ENCODE measurements at regions of chr12 and their contacts with region 1.

Region 1: GRCh38 chr12:10613349-10614055 is at the start of gene MAGOHB:
- DNase-seq: peak; percentile 97 to 100 (median 99)
- ATAC-seq: peak; percentile 90
- H3K4me3 ChIP-seq: peak within 1 kb of the TSS; percentile 74 to 97
- H3K4me3 Mint-ChIP-seq: peak within 1 kb of the TSS; percentile 100
- H3K27ac ChIP-seq: peak within 1 kb of the TSS; percentile 91 to 99
- H3K27ac Mint-ChIP-seq: peak within 1 kb of the TSS; percentile 100
- H3K4me1 ChIP-seq: peaks cover 19% of the 10 kb centered on the region
- H3K4me1 Mint-ChIP-seq: peaks cover 33% of the 10 kb centered on the region
- H3K27me3 ChIP-seq: no peaks in the 10 kb centered on the region
- H3K27me3 Mint-ChIP-seq: no peaks in the 10 kb centered on the region
- CTCF ChIP-seq: no peak
- total RNA-seq, gene MAGOHB: 7.9 to 8.5 TPM

Region 2: GRCh38 chr12:9124383-9125031 is 1489.0 kb before region 1 on chr12:
- CTCF ChIA-PET with region 1: no interaction called
- POLR2A ChIA-PET with region 1: no interaction called
- intact Hi-C with region 1: no loop called
- DNase-seq: no peak
- ATAC-seq: no peak
- H3K4me3 ChIP-seq: no peak overlapping the region
- H3K4me3 Mint-ChIP-seq: no peak overlapping the region
- H3K27ac ChIP-seq: no peak overlapping the region
- H3K27ac Mint-ChIP-seq: no peak overlapping the region
- H3K4me1 ChIP-seq: no peaks in the 10 kb centered on the region
- H3K4me1 Mint-ChIP-seq: no peaks in the 10 kb centered on the region
- H3K27me3 ChIP-seq: no peaks in the 10 kb centered on the region
- H3K27me3 Mint-ChIP-seq: no peaks in the 10 kb centered on the region
- CTCF ChIP-seq: no peak

Region 3: DNA sequence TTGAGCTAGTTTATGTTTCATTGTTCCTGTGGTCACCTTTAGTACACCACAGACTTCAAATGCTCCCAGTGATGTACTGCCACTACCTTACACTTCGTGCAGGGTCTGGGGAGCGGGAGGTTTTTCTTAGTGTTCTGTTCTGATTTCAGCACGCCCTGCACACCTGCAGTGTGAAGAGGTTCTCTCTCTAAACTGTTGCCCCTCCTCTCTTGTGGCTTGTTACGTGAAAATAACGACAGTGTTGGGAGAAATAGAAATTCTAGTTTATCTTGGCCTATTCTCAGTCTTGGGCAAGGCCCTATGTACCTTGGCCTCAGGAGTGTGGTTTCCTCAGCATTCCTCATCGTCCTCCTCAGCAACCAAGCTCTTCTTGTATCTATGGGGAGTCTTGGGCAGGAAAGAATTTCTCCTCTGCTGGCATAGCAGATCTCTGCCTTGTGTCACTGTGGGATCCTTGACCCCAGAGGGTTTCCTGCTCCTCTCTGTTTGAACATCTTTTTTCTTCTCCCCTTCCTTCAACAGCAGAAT is 59.2 kb before region 1 on chr12:
- CTCF ChIA-PET with region 1: no interaction called
- POLR2A ChIA-PET with region 1: interaction called, 5 read pairs
- intact Hi-C with region 1: loop called in 1 of 2 experiments (anchors 2 kb)
- DNase-seq: peak in 8 of 9 experiments; percentile 29 to 85 (median 70)
- ATAC-seq: peak; percentile 64
- H3K4me3 ChIP-seq: peak overlapping the region; percentile 61 to 64
- H3K4me3 Mint-ChIP-seq: peak overlapping the region; percentile 90
- H3K27ac ChIP-seq: peak overlapping the region; percentile 80 to 95
- H3K27ac Mint-ChIP-seq: peak overlapping the region; percentile 100
- H3K4me1 ChIP-seq: peaks cover 32% of the 10 kb centered on the region
- H3K4me1 Mint-ChIP-seq: peaks cover 61% of the 10 kb centered on the region
- H3K27me3 ChIP-seq: no peaks in the 10 kb centered on the region
- H3K27me3 Mint-ChIP-seq: no peaks in the 10 kb centered on the region
- CTCF ChIP-seq: no peak

Region 4: DNA sequence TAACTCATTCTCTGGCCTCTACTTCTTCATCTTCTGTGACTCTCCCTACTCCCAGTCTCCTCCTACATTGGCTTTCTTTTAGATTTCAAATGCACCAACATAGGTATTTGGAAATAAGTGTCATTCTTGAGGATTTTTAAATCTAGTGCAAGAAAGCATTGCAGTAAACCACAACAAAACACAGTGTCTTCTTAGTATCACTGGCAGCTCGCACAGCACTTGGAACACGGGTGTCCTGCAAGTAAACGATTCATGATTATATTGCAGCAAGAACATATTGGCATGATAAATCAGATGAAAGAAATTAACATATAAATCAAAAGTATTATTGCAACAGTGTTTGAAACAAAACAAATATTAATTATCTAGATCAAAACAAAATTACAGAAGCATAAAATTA is 45.7 kb before region 1 on chr12:
- CTCF ChIA-PET with region 1: interaction called, 3 read pairs
- POLR2A ChIA-PET with region 1: no interaction called
- intact Hi-C with region 1: loop called (anchors 2 to 5 kb)
- DNase-seq: no peak
- ATAC-seq: no peak
- H3K4me3 ChIP-seq: peak overlapping the region in 1 of 2 experiments; percentile 10
- H3K4me3 Mint-ChIP-seq: peak overlapping the region; percentile 65
- H3K27ac ChIP-seq: no peak overlapping the region
- H3K27ac Mint-ChIP-seq: peak overlapping the region; percentile 75
- H3K4me1 ChIP-seq: peaks cover 35% of the 10 kb centered on the region
- H3K4me1 Mint-ChIP-seq: peaks cover 81% of the 10 kb centered on the region
- H3K27me3 ChIP-seq: no peaks in the 10 kb centered on the region
- H3K27me3 Mint-ChIP-seq: no peaks in the 10 kb centered on the region
- CTCF ChIP-seq: no peak

Region 5: DNA sequence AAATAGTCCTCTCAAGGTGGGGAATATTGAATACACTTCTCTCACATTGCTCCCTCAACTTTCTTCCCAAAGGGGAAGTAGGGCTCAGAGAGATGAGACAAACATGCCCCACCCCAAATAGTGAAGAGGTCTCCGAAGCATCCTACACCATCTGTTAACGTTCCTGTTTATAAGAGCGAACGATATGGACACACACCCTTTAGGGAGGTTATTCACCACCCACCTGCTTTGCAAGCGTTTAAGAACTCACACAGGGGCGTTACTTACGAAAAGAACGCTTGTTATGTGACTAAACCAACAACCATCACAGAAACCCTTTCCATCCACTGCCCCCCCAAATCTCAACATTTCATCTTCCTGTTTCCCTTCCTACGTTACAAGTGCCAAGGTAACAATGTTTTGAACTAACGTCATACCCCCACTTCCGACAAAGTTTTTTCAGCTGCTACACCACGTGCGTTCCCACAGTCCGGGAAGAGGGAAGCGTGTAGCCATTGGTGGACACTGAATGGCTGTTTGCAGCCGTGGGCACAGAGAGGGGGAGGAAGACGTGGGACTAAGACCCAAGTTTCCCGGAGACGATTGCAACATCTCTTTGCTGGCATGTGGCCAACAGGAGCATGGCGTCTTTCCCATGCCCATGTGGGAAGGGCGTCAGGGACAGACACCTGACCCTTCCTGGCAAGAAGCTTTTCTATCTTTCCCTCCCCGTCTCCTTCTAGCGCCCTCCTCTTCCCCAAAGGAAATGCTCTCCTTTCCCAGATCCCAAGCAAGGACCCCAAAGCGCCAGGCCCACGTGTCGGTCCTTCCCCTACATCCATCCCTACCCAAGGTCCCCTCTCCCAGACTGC is 108.4 kb after region 1 on chr12:
- CTCF ChIA-PET with region 1: no interaction called
- POLR2A ChIA-PET with region 1: no interaction called
- intact Hi-C with region 1: loop called (anchors 1 to 5 kb)
- DNase-seq: peak; percentile 26 to 96 (median 63)
- ATAC-seq: peak; percentile 75
- H3K4me3 ChIP-seq: peak overlapping the region; percentile 69 to 72
- H3K4me3 Mint-ChIP-seq: peak overlapping the region; percentile 91
- H3K27ac ChIP-seq: peak overlapping the region; percentile 86 to 94
- H3K27ac Mint-ChIP-seq: peak overlapping the region; percentile 93
- H3K4me1 ChIP-seq: peaks cover 25% of the 10 kb centered on the region
- H3K4me1 Mint-ChIP-seq: peaks cover 50% of the 10 kb centered on the region
- H3K27me3 ChIP-seq: peaks cover 0 to 6% of the 10 kb centered on the region in 2 experiments
- H3K27me3 Mint-ChIP-seq: peaks cover 15% of the 10 kb centered on the region
- CTCF ChIP-seq: no peak

Region 6: GRCh38 chr12:10918886-10919285 is 305.4 kb after region 1 on chr12:
- CTCF ChIA-PET with region 1: no interaction called
- POLR2A ChIA-PET with region 1: no interaction called
- intact Hi-C with region 1: no loop called
- DNase-seq: no peak
- ATAC-seq: no peak
- H3K4me3 ChIP-seq: no peak overlapping the region
- H3K4me3 Mint-ChIP-seq: no peak overlapping the region
- H3K27ac ChIP-seq: no peak overlapping the region
- H3K27ac Mint-ChIP-seq: no peak overlapping the region
- H3K4me1 ChIP-seq: no peaks in the 10 kb centered on the region
- H3K4me1 Mint-ChIP-seq: no peaks in the 10 kb centered on the region
- H3K27me3 ChIP-seq: no peaks in the 10 kb centered on the region
- H3K27me3 Mint-ChIP-seq: no peaks in the 10 kb centered on the region
- CTCF ChIP-seq: no peak

Region 7: GRCh38 chr12:11171145-11171968 is 557.9 kb after region 1 on chr12 and contains the start of gene SMIM10L1:
- CTCF ChIA-PET with region 1: no interaction called
- POLR2A ChIA-PET with region 1: no interaction called
- intact Hi-C with region 1: loop called in 1 of 2 experiments (anchors 5 kb)
- DNase-seq: peak; percentile 78 to 95 (median 88)
- ATAC-seq: peak; percentile 91
- H3K4me3 ChIP-seq: peak within 1 kb of the TSS; percentile 56 to 73
- H3K4me3 Mint-ChIP-seq: peak within 1 kb of the TSS; percentile 99
- H3K27ac ChIP-seq: peak within 1 kb of the TSS; percentile 72 to 86
- H3K27ac Mint-ChIP-seq: peak within 1 kb of the TSS; percentile 100
- H3K4me1 ChIP-seq: peaks cover 38% of the 10 kb centered on the region
- H3K4me1 Mint-ChIP-seq: peaks cover 66% of the 10 kb centered on the region
- H3K27me3 ChIP-seq: no peaks in the 10 kb centered on the region
- H3K27me3 Mint-ChIP-seq: no peaks in the 10 kb centered on the region
- CTCF ChIP-seq: no peak
- total RNA-seq, gene SMIM10L1: 9.2 to 9.6 TPM